Left cardiac atrium (tissue), 4 donors: ENCODE measurements at regions of chr9 and their contacts with region 1.

Region 1: GRCh38 chr9:129487642-129488409 is 133.1 kb downstream of the C9orf50 start:
- DNase-seq: peak; percentile 77
- ATAC-seq: peak; percentile 4

Region 2: DNA sequence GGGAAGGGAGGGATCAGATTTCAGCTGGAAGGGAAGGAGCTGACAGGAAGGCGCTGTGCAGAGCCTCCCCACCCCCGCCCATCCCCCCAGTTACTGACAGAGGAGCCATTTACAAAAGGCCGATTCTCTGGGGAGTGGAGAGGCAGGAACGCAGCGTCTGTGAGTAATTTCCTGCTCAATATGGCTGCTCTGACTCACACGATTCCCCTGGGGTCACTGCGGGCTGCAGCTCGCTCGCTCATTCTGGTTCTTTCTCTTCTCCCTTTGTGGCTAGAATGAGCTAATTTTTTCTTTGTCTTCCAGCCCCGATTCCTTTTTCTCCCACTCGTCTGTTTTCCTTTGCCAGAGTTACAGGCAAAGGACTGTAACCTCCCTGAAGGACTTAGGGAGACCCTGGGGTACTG is 347.8 kb before region 1 on chr9:
- intact Hi-C with region 1: loop called in 1 of 2 experiments (anchors 5 kb)
- DNase-seq: peak; percentile 96
- ATAC-seq: peak; percentile 77 to 85

Region 3: GRCh38 chr9:129282272-129283211 is 205.3 kb before region 1 on chr9:
- intact Hi-C with region 1: no loop called
- DNase-seq: no peak
- ATAC-seq: peak; percentile 42 to 54

Region 4: GRCh38 chr9:129320575-129321263 is 167.1 kb before region 1 on chr9:
- intact Hi-C with region 1: loop called in 1 of 2 experiments (anchors 5 kb)
- DNase-seq: peak; percentile 67
- ATAC-seq: peak; percentile 76 to 85